Heart right ventricle (tissue), 16 donors: ENCODE measurements at regions of chr15 and their contacts with region 1.

Region 1: DNA sequence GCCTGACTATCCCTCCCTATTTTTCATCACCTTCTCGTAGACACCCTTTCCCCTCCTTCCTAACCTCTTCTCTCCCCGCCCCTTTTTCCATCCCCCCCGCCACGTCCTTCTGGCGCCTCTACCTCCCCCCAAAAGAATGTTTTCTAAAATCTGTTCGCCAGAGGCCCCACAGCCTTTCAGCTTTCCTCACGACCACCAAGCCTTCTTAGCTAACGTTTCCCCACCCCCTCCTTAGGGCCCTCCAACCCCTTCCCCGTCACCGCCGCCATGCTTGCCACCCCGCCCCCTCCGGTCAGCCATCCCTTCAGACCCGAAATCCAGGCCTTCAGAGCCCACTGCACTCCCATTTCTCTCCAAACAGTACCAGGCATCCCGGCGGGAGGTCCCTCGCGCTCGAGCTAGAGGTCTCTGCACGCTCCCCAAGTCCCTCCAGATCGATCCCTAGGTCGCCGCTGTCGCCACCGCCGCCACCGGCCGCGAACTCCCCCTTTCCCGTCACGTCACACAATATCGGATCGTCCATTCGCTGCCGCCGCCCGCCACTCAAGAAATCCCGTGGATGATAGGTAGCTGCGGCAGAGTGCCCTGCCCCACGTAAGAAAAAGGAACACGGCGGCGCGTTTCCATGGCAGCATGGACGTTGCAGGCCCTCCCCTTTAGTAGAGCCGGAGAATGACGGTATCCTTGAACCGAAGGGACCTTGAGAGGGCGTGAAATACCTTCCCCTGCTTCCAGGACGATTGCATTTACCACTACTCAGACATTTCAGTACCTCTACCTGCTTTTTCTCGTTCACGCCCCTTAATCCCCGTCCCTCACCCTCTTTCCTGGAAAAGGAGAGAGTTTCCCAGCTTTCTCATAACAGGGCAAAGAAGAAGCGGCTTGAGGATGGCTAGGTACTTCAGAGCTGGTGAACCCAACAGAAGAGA is at the start of gene TP53BP1:
- DNase-seq: peak; percentile 96 to 98
- ATAC-seq: peak; percentile 99 to 100 (median 100)
- H3K4me3 ChIP-seq: peak within 1 kb of the TSS; percentile 61 to 96 (median 75)
- H3K27ac ChIP-seq: peak within 1 kb of the TSS in 9 of 10 donors; percentile 30 to 88 (median 79)
- H3K4me1 ChIP-seq: peaks cover 0 to 27% (median 21%) of the 10 kb centered on the region in 9 donors
- H3K27me3 ChIP-seq: no peaks in the 10 kb centered on the region
- CTCF ChIP-seq: peak in 1 of 9 donors; percentile 6
- total RNA-seq, gene TP53BP1: 21.2 to 35.2 (median 29.3) TPM

Region 2: GRCh38 chr15:43791993-43792760 is 299.2 kb after region 1 on chr15 and contains the start of gene SERF2:
- intact Hi-C with region 1: loop called in 1 of 10 experiments (anchors 5 kb)
- DNase-seq: peak; percentile 100
- ATAC-seq: peak; percentile 94 to 98 (median 97)
- H3K4me3 ChIP-seq: peak within 1 kb of the TSS; percentile 70 to 100 (median 90)
- H3K27ac ChIP-seq: peak within 1 kb of the TSS; percentile 93 to 100 (median 98)
- H3K4me1 ChIP-seq: peaks cover 20 to 48% (median 37%) of the 10 kb centered on the region in 9 donors
- H3K27me3 ChIP-seq: no peaks in the 10 kb centered on the region
- CTCF ChIP-seq: no peak
- total RNA-seq, gene SERF2: 626 to 1,166 (median 689) TPM